Gastrocnemius medialis (tissue), 4 donors: ENCODE measurements at regions of chr12 and their contacts with region 1.

Region 1: DNA sequence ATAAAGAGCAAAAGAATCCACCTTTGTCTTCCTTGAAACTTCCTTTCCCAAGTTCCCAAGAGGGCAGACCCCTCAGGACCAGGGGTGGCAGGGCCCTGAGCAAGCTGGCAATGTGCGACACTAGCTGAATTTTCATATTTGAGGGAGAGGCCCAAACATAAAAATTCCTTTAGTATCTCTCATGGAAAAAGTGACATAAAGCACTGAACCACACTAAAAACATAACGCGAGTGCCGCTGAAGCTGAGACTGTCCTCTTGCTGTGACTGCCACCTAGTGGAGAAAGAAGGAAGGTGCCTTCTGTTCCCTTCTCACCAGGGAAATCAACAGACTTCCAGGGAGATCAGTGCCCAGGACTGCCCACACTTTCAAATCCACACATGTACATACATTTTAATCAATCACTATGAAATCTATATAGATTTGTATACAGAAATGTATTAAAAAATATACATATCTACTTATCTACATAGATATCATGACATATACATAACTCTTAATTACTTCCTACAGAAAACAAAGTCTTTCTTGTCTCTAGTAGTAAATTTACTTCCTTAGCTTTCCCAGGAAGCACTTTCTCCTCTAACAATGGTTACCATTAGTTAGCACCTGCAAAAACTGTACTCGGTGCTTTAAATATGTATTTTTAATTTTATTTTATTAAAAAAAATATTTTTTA is 53.8 kb downstream of the SSH1 start:
- DNase-seq: peak; percentile 69 to 80
- ATAC-seq: peak; percentile 61 to 70
- H3K4me3 ChIP-seq: peak overlapping the region in 1 of 4 donors; percentile 11
- H3K27ac ChIP-seq: peak overlapping the region; percentile 93 to 97 (median 96)
- H3K4me1 ChIP-seq: peaks cover 62% of the 10 kb centered on the region in 2 donors
- H3K27me3 ChIP-seq: no peaks in the 10 kb centered on the region
- CTCF ChIP-seq: peak; percentile 93 to 97 (median 95)
- POLR2A ChIP-seq: peak in 1 of 2 donors; percentile 11

Region 2: DNA sequence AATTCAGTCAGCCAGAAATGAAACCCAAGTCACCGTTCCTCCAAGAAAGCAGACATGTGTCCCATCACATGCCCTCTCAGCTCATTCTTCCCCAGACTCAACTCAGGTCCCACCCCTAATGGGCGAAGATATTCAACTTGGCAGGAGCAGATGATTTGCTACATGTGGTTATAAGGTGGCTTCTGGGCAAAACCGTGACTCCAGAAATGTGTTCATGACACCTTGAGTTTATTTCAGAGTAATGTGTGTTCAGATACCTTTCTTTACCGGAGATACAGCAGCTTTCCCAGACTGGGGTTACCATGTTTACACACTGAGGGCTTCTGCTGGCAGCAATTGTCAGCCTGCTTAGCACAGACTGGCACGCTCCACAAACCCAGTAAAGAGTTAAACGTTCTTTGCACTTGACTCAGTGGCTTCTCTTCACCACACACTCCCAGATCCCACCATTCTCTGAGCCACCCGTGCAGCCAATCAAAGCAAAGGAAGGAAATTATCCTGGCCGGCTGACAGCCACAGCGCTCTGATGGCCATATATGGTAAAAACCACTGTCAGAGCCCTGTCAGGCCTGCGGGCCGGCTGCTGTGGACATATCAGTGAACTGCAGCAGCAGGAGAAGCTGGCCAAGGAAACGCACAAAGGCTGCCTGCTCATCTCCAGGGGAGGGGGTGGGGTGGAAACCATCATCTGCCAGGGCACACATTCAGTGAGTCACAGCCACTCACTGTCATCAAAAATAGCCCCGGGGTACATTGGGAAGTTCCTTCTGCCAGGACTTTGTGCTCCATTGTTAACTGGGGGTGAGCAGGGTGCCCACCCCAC is 112.2 kb before region 1 on chr12:
- in situ Hi-C with region 1: no loop called
- intact Hi-C with region 1: loop called (anchors 2 kb)
- DNase-seq: peak; percentile 98 to 100
- ATAC-seq: peak; percentile 68 to 72
- H3K4me3 ChIP-seq: peak overlapping the region; percentile 34 to 49 (median 45)
- H3K27ac ChIP-seq: peak overlapping the region; percentile 92 to 98 (median 96)
- H3K4me1 ChIP-seq: peaks cover 86 to 91% of the 10 kb centered on the region in 2 donors
- H3K27me3 ChIP-seq: no peaks in the 10 kb centered on the region
- CTCF ChIP-seq: peak; percentile 44 to 68 (median 56)
- POLR2A ChIP-seq: peak; percentile 60 to 70

Region 3: DNA sequence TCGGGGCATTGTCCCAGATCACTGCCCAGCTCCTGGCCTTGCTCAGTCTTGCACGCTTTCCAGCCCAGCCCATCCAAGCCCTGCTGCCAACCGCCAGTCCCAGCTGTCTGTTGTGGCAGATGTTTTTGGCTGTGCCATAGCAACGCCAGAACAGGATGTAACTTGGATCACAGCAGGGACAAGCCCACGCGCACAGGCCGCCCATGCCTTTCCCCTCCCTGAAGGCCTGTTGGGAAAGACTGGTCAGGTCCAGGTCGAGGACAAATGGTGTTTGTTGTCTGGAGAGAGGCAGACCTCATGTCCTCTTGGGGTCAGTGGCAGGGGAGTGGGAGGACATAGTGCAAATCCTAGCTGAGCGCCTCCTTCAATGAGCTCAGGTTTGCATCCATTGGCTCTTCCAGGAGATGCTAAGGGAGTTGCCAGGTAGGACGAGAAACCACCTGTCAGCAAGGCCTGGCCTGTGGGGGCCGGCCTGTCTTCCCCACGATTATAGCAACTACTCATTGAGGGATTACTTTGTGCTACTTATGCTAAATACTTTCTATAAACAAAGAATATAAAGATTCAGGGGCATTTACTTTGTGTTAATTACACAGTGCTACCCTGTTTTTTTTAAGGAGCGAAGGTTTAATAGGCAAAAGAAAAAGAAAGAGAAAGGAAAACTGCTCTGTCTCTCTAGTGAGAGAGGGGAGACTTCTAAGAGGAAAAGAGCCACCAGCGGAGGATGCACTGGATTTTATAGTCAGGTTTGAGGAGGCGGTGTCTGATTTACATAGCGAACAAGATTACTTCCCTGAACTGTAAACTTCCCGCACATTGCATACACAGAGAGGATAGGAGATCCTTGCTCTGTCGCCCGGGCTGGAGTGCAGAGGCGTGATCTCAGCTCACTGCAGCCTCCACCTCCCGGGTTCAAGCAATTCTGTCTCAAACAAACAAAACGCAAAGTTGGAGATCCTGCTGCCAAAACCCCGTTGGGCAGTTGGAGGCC is 29.5 kb before region 1 on chr12:
- in situ Hi-C with region 1: no loop called
- intact Hi-C with region 1: loop called (anchors 1 kb)
- DNase-seq: peak; percentile 88 to 94
- ATAC-seq: peak; percentile 86 to 90
- H3K4me3 ChIP-seq: no peak overlapping the region
- H3K27ac ChIP-seq: peak overlapping the region; percentile 80 to 86 (median 84)
- H3K4me1 ChIP-seq: peaks cover 36 to 45% of the 10 kb centered on the region in 2 donors
- H3K27me3 ChIP-seq: no peaks in the 10 kb centered on the region
- CTCF ChIP-seq: no peak
- POLR2A ChIP-seq: peak; percentile 8 to 27